ENCODE measurements at regions of chr5 and their contacts with region 1.

Region 1: GRCh38 chr5:83721953-83722901 is 1.6 kb upstream of the HAPLN1 start:
- DNase-seq: peak; percentile 80

Region 2: GRCh38 chr5:83688281-83688680 is 33.9 kb before region 1 on chr5:
- intact Hi-C with region 1: no loop called
- DNase-seq: no peak

Region 3: GRCh38 chr5:83927140-83927733 is 205.0 kb after region 1 on chr5:
- intact Hi-C with region 1: loop called (anchors 10 kb)
- DNase-seq: no peak

Region 4: DNA sequence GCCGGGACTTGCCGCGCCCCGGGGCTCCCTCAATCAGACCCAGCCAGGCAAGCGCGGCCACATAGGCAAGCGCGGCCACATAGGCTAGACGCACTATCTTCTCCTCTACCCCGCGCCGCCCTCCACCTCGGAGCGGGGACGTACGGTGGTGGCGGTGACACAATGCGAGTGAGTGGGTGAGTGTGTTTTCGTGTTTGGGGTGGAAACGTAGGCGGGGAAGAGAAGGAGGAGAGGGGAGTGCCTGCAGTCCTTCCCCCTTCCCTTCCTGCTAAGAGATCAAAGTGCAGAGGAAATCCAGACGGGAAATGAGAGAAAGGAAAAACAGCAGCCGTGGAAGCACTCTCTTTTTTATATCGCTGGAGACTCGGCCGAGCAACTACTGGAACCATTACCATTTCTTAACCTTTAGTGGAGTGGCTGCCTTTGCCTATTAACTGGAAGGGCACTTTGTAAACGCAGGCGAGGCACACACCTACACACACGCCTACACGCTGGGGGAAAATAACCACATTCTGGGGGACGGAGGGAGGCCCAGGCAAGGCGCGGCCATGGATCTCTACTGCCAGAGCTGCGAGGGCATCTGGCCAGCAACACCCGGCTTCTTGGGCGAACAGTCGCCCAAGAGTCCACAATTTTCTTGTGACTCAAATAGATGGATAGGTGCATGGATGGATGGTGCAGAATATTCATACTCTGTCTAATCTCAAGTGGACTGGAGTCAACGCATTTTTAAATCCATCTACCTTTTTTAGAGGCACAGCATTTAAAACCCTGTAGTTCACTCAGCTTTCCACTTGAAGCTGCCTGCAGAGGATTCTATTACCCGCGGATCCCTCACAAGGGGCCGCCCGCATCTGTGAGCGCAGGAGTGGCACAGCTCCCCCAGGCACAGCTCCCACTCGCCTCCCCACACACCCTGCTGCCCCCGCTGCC is 660.4 kb after region 1 on chr5:
- intact Hi-C with region 1: loop called (anchors 5 kb)
- DNase-seq: peak; percentile 75

Measured in cardiac septum (tissue), 1 donor.